ENCODE measurements at regions of chr6 and their contacts with region 1.

Region 1: DNA sequence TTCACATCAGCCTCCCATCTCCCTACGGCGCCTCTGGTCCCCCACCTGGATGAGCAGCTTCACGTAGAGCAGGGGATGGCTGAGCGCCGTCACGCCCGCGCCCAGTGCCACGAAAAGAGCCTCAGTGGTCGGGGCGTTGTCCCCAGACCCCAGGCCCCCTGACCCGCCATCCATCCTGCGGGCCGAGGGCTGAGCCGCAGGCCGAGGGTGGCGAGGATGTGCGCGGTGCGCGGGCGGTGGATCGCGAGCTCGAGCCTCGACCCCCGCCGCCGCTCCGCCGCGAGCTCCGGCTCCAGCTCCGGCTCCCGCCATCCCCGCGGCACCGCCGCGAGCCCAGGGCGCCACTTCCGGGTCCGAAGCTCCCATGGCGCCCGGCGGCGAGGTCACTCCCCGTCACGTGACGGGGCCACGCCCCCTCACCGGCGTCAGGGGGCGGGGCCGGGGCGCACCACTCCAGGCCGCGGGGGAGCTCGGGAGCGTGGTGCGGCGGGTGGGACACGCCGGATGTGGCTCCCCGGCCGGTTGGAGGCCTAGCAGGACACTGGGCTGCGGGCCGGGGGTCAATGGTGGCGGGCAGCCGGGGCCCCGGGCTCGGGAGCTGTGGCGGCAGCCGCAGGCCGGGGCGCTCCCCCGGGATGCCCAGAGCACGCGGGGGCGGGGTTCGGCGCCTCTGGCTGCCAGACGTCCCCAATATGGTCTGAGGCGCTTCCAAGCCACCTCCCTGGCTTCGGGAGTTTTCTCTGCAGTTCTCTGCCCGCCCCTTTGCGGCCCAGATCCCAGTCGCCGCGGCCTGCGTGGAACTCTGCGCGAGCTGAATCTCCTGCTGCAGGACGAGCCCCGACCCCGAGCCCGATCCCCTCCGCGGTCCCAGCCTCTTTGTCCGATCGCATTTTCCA is at the start of gene MTCH1:
- DNase-seq: peak; percentile 89 to 95 (median 90)
- H3K4me3 ChIP-seq: peak within 1 kb of the TSS; percentile 82 to 93
- H3K4me3 Mint-ChIP-seq: peak within 1 kb of the TSS; percentile 93 to 99 (median 96)
- H3K27ac ChIP-seq: peak within 1 kb of the TSS; percentile 94
- H3K27ac Mint-ChIP-seq: peak within 1 kb of the TSS in 6 of 7 donors; percentile 92 to 98 (median 98)
- H3K4me1 ChIP-seq: peaks cover 41% of the 10 kb centered on the region
- H3K4me1 Mint-ChIP-seq: peaks cover 14 to 30% (median 16%) of the 10 kb centered on the region in 4 donors
- H3K27me3 ChIP-seq: no peaks in the 10 kb centered on the region
- H3K27me3 Mint-ChIP-seq: peaks cover 0 to 2% of the 10 kb centered on the region in 2 donors
- total RNA-seq, gene MTCH1: 142 to 151 TPM

Region 2: GRCh38 chr6:36514554-36515456 is 471.3 kb before region 1 on chr6:
- CTCF ChIA-PET with region 1: no interaction called
- POLR2A ChIA-PET with region 1: no interaction called
- intact Hi-C with region 1: no loop called
- DNase-seq: no peak
- H3K4me3 ChIP-seq: no peak overlapping the region
- H3K4me3 Mint-ChIP-seq: no peak overlapping the region
- H3K27ac ChIP-seq: no peak overlapping the region
- H3K27ac Mint-ChIP-seq: peak overlapping the region; percentile 1 to 75 (median 65)
- H3K4me1 ChIP-seq: peaks cover 15% of the 10 kb centered on the region
- H3K4me1 Mint-ChIP-seq: peaks cover 15 to 42% (median 30%) of the 10 kb centered on the region in 4 donors
- H3K27me3 ChIP-seq: no peaks in the 10 kb centered on the region
- H3K27me3 Mint-ChIP-seq: no peaks in the 10 kb centered on the region

Region 3: GRCh38 chr6:36829919-36830544 is 156.0 kb before region 1 on chr6:
- CTCF ChIA-PET with region 1: no interaction called
- POLR2A ChIA-PET with region 1: no interaction called
- intact Hi-C with region 1: no loop called
- DNase-seq: no peak
- H3K4me3 ChIP-seq: no peak overlapping the region
- H3K4me3 Mint-ChIP-seq: no peak overlapping the region
- H3K27ac ChIP-seq: no peak overlapping the region
- H3K27ac Mint-ChIP-seq: no peak overlapping the region
- H3K4me1 ChIP-seq: no peaks in the 10 kb centered on the region
- H3K4me1 Mint-ChIP-seq: peaks cover 0 to 7% (median 4%) of the 10 kb centered on the region in 4 donors
- H3K27me3 ChIP-seq: no peaks in the 10 kb centered on the region
- H3K27me3 Mint-ChIP-seq: peaks cover 0 to 4% of the 10 kb centered on the region in 2 donors

Region 4: DNA sequence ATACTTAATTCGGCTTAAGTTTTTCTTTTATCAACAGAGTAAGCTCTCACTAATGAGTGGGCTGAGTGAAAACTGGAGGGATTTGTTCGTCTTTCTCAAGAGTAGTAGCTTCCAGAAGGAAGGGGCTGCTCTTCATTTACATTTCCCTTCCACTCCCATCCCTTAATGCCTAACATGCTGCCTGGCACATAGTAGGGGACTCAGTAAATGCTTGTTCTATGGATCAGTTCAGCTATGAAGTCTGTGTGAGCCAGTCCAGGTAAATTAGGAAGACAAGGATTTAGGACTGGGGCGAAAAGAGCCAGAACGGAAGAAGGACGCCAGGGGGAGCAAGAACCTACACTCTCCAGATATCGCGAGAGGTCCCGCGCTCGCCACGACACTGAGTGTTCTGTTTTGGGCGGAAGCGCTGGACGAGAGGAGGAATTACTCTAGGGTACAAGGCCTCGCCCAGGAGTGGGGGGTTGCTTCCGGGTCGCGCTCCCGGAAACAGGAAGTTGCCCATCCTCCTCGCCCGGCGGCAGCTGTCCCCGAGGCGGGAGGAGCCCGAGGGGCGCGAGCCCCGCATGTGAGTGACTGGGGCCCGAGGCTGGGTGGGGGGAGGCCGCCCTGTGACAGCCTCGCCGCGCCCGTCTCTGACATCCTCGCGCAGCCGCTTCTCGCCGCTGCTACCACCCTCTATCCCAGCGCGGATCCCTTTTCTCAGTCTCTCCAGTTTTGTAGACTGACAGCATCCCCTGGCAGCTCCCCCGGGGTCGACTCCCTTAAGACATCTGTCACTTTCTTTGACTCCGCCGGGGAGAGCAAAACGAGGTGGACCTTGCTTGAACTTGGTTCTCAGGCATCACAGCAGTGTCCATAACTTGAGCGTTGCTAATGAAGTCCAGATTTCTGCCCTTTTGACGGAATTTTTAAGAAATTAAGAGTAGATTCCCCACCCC is 100.3 kb before region 1 on chr6 and contains the start of gene C6orf89:
- CTCF ChIA-PET with region 1: interaction called, 17 read pairs
- POLR2A ChIA-PET with region 1: interaction called, 33 read pairs
- intact Hi-C with region 1: loop called (anchors 1 kb)
- DNase-seq: peak; percentile 95 to 98 (median 97)
- H3K4me3 ChIP-seq: peak within 1 kb of the TSS; percentile 71 to 84
- H3K4me3 Mint-ChIP-seq: peak within 1 kb of the TSS; percentile 82 to 93 (median 90)
- H3K27ac ChIP-seq: peak within 1 kb of the TSS; percentile 85
- H3K27ac Mint-ChIP-seq: peak within 1 kb of the TSS; percentile 94 to 98 (median 96)
- H3K4me1 ChIP-seq: peaks cover 50% of the 10 kb centered on the region
- H3K4me1 Mint-ChIP-seq: peaks cover 23 to 51% (median 39%) of the 10 kb centered on the region in 4 donors
- H3K27me3 ChIP-seq: no peaks in the 10 kb centered on the region
- H3K27me3 Mint-ChIP-seq: no peaks in the 10 kb centered on the region
- total RNA-seq, gene C6orf89: 53.0 to 56.0 TPM

Region 5: DNA sequence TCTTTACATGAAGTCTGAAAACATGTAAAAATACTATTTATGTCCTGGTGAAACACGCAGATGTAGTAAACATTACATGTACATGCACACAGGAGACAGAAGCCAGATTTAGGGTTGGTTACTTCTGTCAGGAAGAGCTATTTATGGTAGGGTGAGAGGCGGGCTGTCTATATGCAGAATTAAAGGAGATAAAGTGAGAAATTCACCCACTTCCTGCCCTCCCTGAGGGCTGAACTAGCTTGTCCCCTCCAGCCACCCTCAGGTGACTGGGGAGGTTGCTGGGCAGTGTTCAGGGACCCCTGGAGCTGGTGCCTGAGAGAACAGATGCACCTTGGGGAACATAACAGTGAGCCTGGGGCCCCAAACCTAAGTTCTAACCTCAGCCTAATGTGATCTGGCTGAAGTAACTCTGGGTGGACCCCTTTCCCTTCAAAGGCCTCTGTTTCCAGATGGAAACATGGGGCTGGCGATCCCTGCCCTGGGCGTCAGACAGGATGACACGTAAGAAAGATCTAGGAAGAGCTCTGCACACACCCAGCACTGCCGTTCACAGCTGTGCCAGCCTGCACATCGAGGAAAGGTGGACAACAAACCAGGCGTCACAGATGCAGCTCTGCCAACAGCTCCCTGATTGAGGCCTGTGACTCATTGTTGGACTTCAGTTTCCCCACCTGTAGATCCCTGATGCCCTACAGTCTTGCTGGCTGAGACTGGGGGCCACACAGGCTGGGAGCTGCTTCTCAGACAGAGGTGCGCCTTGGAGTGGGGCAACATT is 30.2 kb before region 1 on chr6:
- CTCF ChIA-PET with region 1: interaction called, 3 read pairs
- POLR2A ChIA-PET with region 1: interaction called, 25 read pairs
- intact Hi-C with region 1: no loop called
- DNase-seq: no peak
- H3K4me3 ChIP-seq: peak overlapping the region; percentile 5 to 35
- H3K4me3 Mint-ChIP-seq: peak overlapping the region; percentile 83 to 93 (median 88)
- H3K27ac ChIP-seq: peak overlapping the region; percentile 33
- H3K27ac Mint-ChIP-seq: peak overlapping the region; percentile 70 to 94 (median 88)
- H3K4me1 ChIP-seq: peaks cover 64% of the 10 kb centered on the region
- H3K4me1 Mint-ChIP-seq: peaks cover 45 to 62% (median 54%) of the 10 kb centered on the region in 4 donors
- H3K27me3 ChIP-seq: no peaks in the 10 kb centered on the region
- H3K27me3 Mint-ChIP-seq: no peaks in the 10 kb centered on the region

Region 6: GRCh38 chr6:37005061-37005810 is 19.2 kb after region 1 on chr6 and contains the start of gene FGD2:
- CTCF ChIA-PET with region 1: interaction called, 3 read pairs
- POLR2A ChIA-PET with region 1: interaction called, 13 read pairs
- intact Hi-C with region 1: no loop called
- DNase-seq: no peak
- H3K4me3 ChIP-seq: peak within 1 kb of the TSS in 1 of 2 donors; percentile 37
- H3K4me3 Mint-ChIP-seq: peak within 1 kb of the TSS; percentile 59 to 87 (median 82)
- H3K27ac ChIP-seq: peak within 1 kb of the TSS; percentile 28
- H3K27ac Mint-ChIP-seq: peak within 1 kb of the TSS; percentile 0 to 92 (median 85)
- H3K4me1 ChIP-seq: peaks cover 17% of the 10 kb centered on the region
- H3K4me1 Mint-ChIP-seq: peaks cover 9 to 25% (median 17%) of the 10 kb centered on the region in 4 donors
- H3K27me3 ChIP-seq: no peaks in the 10 kb centered on the region
- H3K27me3 Mint-ChIP-seq: no peaks in the 10 kb centered on the region
- total RNA-seq, gene FGD2: 1.4 to 1.5 TPM